ENCODE measurements at regions of chr13 and their contacts with region 1.

Region 1: DNA sequence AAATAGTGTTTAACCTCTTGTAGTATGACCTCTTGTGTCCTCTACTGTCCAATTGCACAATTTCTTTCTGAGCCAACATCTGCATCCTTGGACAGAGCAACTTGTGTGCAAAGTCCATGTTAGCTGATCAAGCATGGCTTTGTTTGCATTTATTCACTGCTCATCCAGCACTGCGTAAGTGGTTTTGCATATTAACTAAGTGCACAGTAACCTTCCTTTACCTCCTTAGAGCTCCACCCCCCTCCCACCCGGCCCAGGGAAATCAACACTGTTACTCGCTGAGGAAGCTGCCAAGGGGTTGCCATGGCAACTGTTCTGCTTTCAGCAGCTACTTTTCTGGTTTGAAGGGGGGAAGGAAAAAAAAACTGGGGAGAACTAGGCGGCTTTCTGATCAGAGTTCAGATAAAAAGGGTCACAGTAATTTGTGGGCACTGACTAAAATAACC is 153.5 kb upstream of the KLF12 start:
- DNase-seq: peak; percentile 71 to 98 (median 83)
- ATAC-seq: peak; percentile 70
- H3K4me3 ChIP-seq: peak overlapping the region; percentile 39
- H3K4me3 Mint-ChIP-seq: peak overlapping the region; percentile 80
- H3K27ac ChIP-seq: peak overlapping the region; percentile 78 to 82
- H3K27ac Mint-ChIP-seq: peak overlapping the region; percentile 84
- H3K4me1 ChIP-seq: peaks cover 39% of the 10 kb centered on the region
- H3K4me1 Mint-ChIP-seq: peaks cover 68% of the 10 kb centered on the region
- H3K27me3 ChIP-seq: no peaks in the 10 kb centered on the region
- H3K27me3 Mint-ChIP-seq: no peaks in the 10 kb centered on the region
- CTCF ChIP-seq: no peak

Region 2: GRCh38 chr13:73754727-73755292 is 532.9 kb before region 1 on chr13:
- CTCF ChIA-PET with region 1: no interaction called
- POLR2A ChIA-PET with region 1: interaction called, 14 read pairs
- intact Hi-C with region 1: loop called in 1 of 2 experiments (anchors 5 kb)
- DNase-seq: peak in 7 of 14 experiments; percentile 4 to 78 (median 59)
- ATAC-seq: peak; percentile 60
- H3K4me3 ChIP-seq: no peak overlapping the region
- H3K4me3 Mint-ChIP-seq: no peak overlapping the region
- H3K27ac ChIP-seq: no peak overlapping the region
- H3K27ac Mint-ChIP-seq: peak overlapping the region; percentile 21
- H3K4me1 ChIP-seq: peaks cover 2% of the 10 kb centered on the region
- H3K4me1 Mint-ChIP-seq: peaks cover 62% of the 10 kb centered on the region
- H3K27me3 ChIP-seq: no peaks in the 10 kb centered on the region
- H3K27me3 Mint-ChIP-seq: no peaks in the 10 kb centered on the region
- CTCF ChIP-seq: peak; percentile 86

Region 3: GRCh38 chr13:73849292-73849691 is 438.5 kb before region 1 on chr13:
- CTCF ChIA-PET with region 1: interaction called, 13 read pairs
- POLR2A ChIA-PET with region 1: interaction called, 5 read pairs
- intact Hi-C with region 1: no loop called
- DNase-seq: peak in 5 of 14 experiments; percentile 13 to 61 (median 53)
- ATAC-seq: peak; percentile 63
- H3K4me3 ChIP-seq: no peak overlapping the region
- H3K4me3 Mint-ChIP-seq: no peak overlapping the region
- H3K27ac ChIP-seq: no peak overlapping the region
- H3K27ac Mint-ChIP-seq: peak overlapping the region; percentile 22
- H3K4me1 ChIP-seq: peaks cover 5% of the 10 kb centered on the region
- H3K4me1 Mint-ChIP-seq: peaks cover 67% of the 10 kb centered on the region
- H3K27me3 ChIP-seq: no peaks in the 10 kb centered on the region
- H3K27me3 Mint-ChIP-seq: no peaks in the 10 kb centered on the region
- CTCF ChIP-seq: peak; percentile 74

Region 4: DNA sequence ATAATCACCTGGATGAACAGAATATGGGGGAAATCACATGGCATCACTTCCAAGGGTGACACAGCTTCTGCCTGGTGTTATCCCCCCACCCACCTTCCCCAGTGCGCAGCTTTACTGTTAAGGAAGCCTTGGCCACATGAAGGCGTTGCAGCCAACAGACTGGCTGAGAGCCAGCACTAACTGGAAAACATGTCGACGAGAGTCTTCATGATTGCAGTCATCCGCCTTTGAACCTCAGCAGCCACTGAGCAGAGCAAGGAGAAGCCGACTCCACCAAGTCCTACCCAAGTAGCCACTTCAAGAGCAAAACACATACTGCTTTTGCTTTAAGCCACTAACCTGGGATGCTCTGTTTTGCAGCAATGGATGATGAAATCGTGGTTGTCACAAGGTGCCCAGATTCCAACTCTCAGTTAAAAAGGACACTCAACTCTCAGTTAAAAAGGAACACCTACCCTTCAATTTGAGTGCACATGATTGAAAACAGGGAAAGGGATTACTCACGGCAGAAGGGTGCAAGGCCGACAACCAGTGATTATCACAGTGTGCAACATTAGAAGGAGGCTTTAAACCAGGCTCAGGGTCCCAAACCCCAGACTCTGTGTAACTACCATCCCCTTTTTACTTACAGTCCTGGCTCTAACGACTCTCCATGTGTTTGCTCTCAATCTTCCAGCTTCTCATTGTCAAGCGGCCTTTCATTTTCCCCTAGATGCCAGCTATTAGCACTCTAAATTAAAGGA is 302.6 kb before region 1 on chr13:
- CTCF ChIA-PET with region 1: no interaction called
- POLR2A ChIA-PET with region 1: interaction called, 27 read pairs
- intact Hi-C with region 1: loop called (anchors 2 to 5 kb)
- DNase-seq: peak; percentile 64 to 94 (median 78)
- ATAC-seq: peak; percentile 90
- H3K4me3 ChIP-seq: peak overlapping the region; percentile 25
- H3K4me3 Mint-ChIP-seq: peak overlapping the region; percentile 85
- H3K27ac ChIP-seq: peak overlapping the region; percentile 42 to 61
- H3K27ac Mint-ChIP-seq: no peak overlapping the region
- H3K4me1 ChIP-seq: peaks cover 33% of the 10 kb centered on the region
- H3K4me1 Mint-ChIP-seq: peaks cover 50% of the 10 kb centered on the region
- H3K27me3 ChIP-seq: no peaks in the 10 kb centered on the region
- H3K27me3 Mint-ChIP-seq: no peaks in the 10 kb centered on the region
- CTCF ChIP-seq: no peak

Region 5: GRCh38 chr13:74062933-74063332 is 224.8 kb before region 1 on chr13:
- CTCF ChIA-PET with region 1: interaction called, 7 read pairs
- POLR2A ChIA-PET with region 1: interaction called, 22 read pairs
- intact Hi-C with region 1: no loop called
- DNase-seq: peak in 4 of 14 experiments; percentile 10 to 65 (median 34)
- ATAC-seq: peak; percentile 9
- H3K4me3 ChIP-seq: peak overlapping the region; percentile 24
- H3K4me3 Mint-ChIP-seq: peak overlapping the region; percentile 35
- H3K27ac ChIP-seq: peak overlapping the region; percentile 48 to 70
- H3K27ac Mint-ChIP-seq: peak overlapping the region; percentile 80
- H3K4me1 ChIP-seq: peaks cover 37% of the 10 kb centered on the region
- H3K4me1 Mint-ChIP-seq: peaks cover 89% of the 10 kb centered on the region
- H3K27me3 ChIP-seq: no peaks in the 10 kb centered on the region
- H3K27me3 Mint-ChIP-seq: no peaks in the 10 kb centered on the region
- CTCF ChIP-seq: no peak

Region 6: GRCh38 chr13:74230984-74231501 is 56.7 kb before region 1 on chr13:
- CTCF ChIA-PET with region 1: interaction called, 18 read pairs
- POLR2A ChIA-PET with region 1: interaction called, 7 read pairs
- intact Hi-C with region 1: no loop called
- DNase-seq: peak in 4 of 14 experiments; percentile 14 to 79 (median 52)
- ATAC-seq: peak; percentile 88
- H3K4me3 ChIP-seq: peak overlapping the region; percentile 56
- H3K4me3 Mint-ChIP-seq: peak overlapping the region; percentile 79
- H3K27ac ChIP-seq: peak overlapping the region; percentile 15 to 38
- H3K27ac Mint-ChIP-seq: peak overlapping the region; percentile 90
- H3K4me1 ChIP-seq: peaks cover 17% of the 10 kb centered on the region
- H3K4me1 Mint-ChIP-seq: peaks cover 51% of the 10 kb centered on the region
- H3K27me3 ChIP-seq: no peaks in the 10 kb centered on the region
- H3K27me3 Mint-ChIP-seq: no peaks in the 10 kb centered on the region
- CTCF ChIP-seq: no peak

Measured in CD4-positive, alpha-beta T cell (primary cell).